Aorta (tissue), 5 donors: ENCODE measurements at regions of chr12 and their contacts with region 1.

Region 1: DNA sequence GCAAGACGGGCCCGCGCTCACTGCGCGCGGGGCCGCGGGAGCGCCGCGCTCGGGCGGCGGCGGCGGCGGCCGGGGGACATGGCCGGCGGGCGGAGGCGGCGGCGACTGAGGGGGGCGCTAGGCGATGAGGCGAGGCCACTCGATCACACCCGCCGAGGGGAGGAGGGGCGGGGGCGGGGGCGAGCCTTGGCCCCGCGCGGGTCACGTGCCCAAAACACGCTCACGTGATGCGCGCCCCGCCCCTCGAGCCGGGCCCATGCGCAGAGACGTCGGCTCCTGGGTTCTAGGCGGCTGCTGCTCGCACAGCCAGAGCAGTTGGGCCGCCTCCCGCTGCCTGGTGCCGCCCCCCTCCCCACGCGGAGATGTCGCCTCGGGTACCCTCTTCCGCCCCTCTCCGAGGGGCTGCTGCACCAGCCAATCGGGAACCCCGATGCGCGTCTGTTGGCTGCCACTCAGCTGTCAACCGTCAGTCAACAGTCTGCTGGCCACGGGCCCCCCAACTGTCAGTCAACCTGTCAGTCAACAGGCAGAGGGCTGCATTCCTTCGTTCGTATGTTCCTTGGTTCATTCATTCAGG is at the start of gene SPPL3:
- DNase-seq: peak; percentile 95 to 97
- ATAC-seq: peak; percentile 95
- H3K4me3 ChIP-seq: peak within 1 kb of the TSS; percentile 93 to 98
- H3K27ac ChIP-seq: peak within 1 kb of the TSS in 1 of 2 donors; percentile 39
- H3K4me1 ChIP-seq: peaks cover 1 to 8% of the 10 kb centered on the region in 2 donors
- H3K27me3 ChIP-seq: no peaks in the 10 kb centered on the region
- total RNA-seq, gene SPPL3: 33.1 to 48.9 TPM

Region 2: GRCh38 chr12:120833849-120834248 is 70.4 kb before region 1 on chr12:
- intact Hi-C with region 1: loop called in 1 of 2 experiments (anchors 10 kb)
- DNase-seq: no peak
- ATAC-seq: no peak
- H3K4me3 ChIP-seq: no peak overlapping the region
- H3K27ac ChIP-seq: no peak overlapping the region
- H3K4me1 ChIP-seq: peaks cover 2 to 9% of the 10 kb centered on the region in 2 donors
- H3K27me3 ChIP-seq: no peaks in the 10 kb centered on the region